Activated CD4-positive, alpha-beta memory T cell treated with anti-CD3 and anti-CD28 coated beads for 36 hours (primary cell): ENCODE measurements at regions of chr5 and their contacts with region 1.

Region 1: GRCh38 chr5:170183816-170184687 is 48.7 kb upstream of the C5orf58 start:
- DNase-seq: peak; percentile 65
- H3K4me3 Mint-ChIP-seq: no peak overlapping the region
- H3K27ac Mint-ChIP-seq: no peak overlapping the region
- H3K4me1 Mint-ChIP-seq: peaks cover 5% of the 10 kb centered on the region
- H3K27me3 Mint-ChIP-seq: no peaks in the 10 kb centered on the region

Region 2: DNA sequence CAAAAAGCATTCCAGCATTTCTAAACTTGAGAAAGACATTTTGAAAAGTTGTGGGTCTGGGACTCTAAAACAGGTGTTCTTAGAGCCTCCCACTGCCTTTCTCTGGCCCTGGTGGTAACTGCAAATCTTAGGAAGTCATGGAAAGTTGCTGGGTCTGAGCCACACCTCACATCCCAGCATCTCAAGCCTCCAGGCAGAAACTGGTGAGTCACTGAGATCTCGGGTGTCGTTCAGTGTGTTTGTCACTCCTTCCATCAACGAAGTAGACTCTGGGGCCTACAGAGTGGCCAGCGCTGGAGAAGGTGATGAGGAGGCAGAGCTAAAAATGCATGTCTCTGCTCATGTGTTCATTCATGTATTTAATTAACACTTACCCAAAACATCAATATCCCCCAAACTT is 10.8 kb before region 1 on chr5:
- CTCF ChIA-PET with region 1: interaction called, 14 read pairs
- POLR2A ChIA-PET with region 1: no interaction called
- intact Hi-C with region 1: no loop called
- DNase-seq: no peak
- H3K4me3 Mint-ChIP-seq: no peak overlapping the region
- H3K27ac Mint-ChIP-seq: no peak overlapping the region
- H3K4me1 Mint-ChIP-seq: no peaks in the 10 kb centered on the region
- H3K27me3 Mint-ChIP-seq: no peaks in the 10 kb centered on the region